SK-MEL-5 (cell line): ENCODE measurements at regions of chr15 and their contacts with region 1.

Region 1: DNA sequence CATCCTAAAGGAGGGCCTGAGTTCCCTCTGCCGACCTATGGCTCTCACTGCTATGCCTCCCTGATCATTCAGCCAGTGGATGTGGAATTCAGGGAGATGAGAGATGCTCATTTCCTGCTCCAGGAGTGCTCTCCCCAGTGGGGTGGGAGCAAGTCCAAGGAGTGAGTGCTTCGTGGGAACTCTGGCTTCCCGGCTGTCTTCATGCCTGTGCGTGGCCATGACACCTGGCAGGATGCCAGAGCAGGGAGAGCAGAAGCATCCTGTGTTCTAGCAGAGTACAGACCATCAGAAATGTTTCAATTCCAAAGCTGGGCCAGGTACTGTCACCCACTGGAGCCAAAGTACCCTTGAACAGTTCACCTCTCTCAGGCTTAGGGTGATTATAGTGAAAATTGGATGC is 45.1 kb downstream of the APH1B start:
- DNase-seq: no peak

Region 2: GRCh38 chr15:63402498-63403253 is 80.1 kb after region 1 on chr15:
- in situ Hi-C with region 1: loop called (anchors 25 kb)
- DNase-seq: peak; percentile 70